ENCODE measurements at regions of chr12 and their contacts with region 1.

Region 1: DNA sequence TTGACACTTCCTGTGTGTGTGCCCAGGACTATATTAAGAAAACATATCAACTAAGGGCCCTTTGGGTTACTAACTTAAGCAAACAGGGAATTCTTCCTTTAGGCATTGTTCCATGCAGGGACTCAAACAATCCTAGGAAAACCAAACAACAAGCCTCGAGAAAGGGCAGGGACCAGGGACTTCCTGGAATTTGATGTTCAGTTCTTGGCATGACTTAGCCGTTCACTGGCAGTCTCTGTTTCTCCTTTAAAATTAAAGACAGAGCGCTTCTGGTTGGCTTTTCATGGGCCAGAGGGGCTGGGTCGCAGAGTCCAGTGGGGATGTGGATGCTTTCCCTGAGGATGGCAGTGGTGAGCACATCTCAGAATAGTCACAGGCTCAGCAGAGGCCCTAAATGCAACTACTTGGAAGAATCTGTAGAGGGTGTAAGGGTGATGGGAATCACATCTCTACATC is 35.2 kb downstream of the RNFT2 start:
- DNase-seq: no peak
- CTCF ChIP-seq: no peak

Region 2: GRCh38 chr12:115922952-115923564 is 850.2 kb before region 1 on chr12:
- CTCF ChIA-PET with region 1: no interaction called
- POLR2A ChIA-PET with region 1: no interaction called
- DNase-seq: no peak
- CTCF ChIP-seq: no peak

Region 3: DNA sequence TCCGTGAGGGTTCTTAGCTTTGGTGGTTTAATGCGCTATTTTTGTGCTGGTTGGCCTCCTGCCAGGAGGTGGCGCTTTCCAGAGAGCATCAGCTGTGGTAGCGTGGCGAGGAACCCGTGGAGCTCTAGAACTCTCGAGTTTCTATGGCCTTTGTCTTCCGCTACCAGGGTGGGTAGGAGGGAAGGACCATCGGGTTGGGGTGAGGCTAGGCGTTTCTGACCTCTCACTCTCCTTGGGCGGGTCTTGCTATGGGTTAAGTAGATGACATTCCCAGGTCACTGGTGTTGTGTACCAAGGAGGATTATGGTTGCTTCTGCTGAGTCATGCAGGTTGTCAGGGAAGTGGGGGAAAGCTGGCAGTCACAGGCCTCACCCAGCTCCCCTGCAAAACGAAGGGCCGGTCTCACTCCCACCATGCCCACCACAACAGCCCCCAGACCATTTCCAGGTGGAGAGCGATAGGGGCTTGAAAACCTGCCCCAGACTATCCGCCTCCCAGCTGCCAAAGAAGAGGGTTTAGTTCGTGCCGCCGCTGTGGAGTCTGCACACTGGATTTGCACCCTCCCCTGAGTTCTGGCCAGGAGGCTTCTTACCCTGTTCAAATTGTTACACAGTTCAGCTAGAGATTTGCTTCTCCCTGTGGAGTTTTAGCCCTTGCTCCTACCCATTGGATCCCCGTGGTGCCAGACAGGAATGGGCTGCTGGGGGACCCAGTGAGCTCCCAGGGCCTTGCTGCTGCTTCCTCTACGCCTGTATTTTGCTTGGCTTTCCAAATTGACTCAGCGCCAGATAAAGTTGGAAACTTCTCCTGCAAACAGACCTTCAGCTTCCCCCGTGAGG is 13.3 kb before region 1 on chr12:
- CTCF ChIA-PET with region 1: interaction called, 13 read pairs
- POLR2A ChIA-PET with region 1: no interaction called
- DNase-seq: no peak
- CTCF ChIP-seq: no peak